ENCODE measurements at regions of chr2 and their contacts with region 1.

Region 1: DNA sequence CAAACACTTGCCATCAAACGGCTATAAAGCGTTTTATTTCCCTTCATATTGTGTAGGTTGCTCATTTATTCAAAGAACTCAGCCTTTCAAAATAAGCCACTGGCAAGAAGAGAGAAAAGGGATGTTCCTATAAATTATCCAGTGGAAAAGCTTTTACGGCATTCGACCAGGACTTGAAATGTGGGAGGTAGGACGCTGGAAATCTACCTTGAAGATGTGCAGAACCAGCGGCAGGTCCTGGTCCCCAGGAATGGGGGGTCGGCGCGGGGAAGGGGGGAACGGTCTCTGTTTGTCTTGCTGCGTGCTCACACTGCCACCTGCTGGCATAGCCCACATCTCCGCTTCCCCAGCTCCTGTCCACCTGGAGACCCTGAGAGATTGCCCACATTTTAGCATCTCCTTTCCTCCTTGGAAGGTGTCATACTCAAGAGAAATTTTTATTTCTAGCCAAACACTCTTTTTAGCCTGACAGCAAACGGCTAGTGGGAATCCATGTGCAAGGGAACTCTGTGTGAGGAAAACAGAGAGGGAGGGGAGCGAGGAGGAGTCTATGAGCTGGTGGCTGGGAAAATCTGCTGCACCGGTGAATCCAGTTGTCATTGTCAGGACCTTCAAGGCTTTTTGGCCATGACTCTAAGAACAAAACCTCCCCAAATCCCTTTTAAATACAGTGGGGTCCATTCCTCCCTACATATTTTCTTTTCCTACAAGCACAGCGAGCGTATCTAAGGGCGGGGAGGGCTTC is 349.0 kb upstream of the PKDCC start:
- DNase-seq: peak; percentile 85
- H3K4me3 ChIP-seq: peak overlapping the region in 1 of 2 experiments; percentile 12; a peak in 1 of 4 replicates
- H3K27ac ChIP-seq: no peak overlapping the region
- H3K4me1 ChIP-seq: peaks cover 0 to 6% of the 10 kb centered on the region in 2 experiments; a peak in 1 of 4 replicates
- H3K27me3 ChIP-seq: no peaks in the 10 kb centered on the region
- CTCF ChIP-seq: peak; percentile 92
- EP300 ChIP-seq: no peak
- RAD21 ChIP-seq: peak; percentile 96

Region 2: DNA sequence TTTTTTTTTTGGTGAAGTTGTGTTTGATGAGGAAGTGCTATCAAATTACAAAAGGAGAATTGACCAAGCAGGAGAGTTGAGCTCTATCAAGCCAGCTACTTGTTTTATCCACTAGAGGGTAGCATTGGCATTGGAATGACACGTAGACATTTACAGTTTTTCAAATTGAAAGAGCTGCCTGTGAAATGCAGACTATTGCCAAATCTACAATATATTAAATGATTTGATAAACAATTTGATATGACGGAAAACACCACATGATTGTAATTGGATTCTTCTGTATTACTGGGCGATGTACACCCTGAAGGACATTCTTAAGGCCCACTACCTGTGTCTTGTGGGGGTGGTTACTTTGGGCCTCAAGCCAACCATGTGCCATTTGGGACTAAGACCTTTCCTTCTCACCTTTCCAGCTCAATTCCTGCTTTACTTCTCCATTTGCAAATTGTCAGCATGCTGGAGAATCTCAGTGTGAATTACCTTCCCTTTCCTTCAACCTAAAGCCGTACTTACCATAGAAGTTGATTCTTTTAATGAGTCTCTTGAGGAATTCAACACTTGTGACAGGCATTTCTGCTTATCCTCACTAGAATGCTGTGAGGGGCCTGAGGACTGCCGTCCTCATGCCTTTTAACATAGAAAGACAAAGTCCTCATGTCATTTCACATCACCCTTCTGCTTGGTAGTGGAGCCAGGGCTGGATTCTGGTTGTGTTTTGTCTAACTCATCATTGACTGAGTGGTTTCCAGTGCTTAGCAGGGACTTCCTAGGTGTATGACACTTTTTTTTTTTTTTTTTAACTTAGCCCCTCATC is 1785.0 kb before region 1 on chr2:
- CTCF ChIA-PET with region 1: interaction called, 82 read pairs
- POLR2A ChIA-PET with region 1: interaction called, 3 read pairs
- DNase-seq: peak; percentile 57
- H3K4me3 ChIP-seq: no peak overlapping the region; a peak in 1 of 4 replicates
- H3K27ac ChIP-seq: no peak overlapping the region
- H3K4me1 ChIP-seq: no peaks in the 10 kb centered on the region; a peak in 2 of 4 replicates
- H3K27me3 ChIP-seq: no peaks in the 10 kb centered on the region
- CTCF ChIP-seq: peak; percentile 98
- EP300 ChIP-seq: peak in 1 of 2 experiments; percentile 38; a peak in 1 of 4 replicates
- RAD21 ChIP-seq: peak; percentile 100

Region 3: DNA sequence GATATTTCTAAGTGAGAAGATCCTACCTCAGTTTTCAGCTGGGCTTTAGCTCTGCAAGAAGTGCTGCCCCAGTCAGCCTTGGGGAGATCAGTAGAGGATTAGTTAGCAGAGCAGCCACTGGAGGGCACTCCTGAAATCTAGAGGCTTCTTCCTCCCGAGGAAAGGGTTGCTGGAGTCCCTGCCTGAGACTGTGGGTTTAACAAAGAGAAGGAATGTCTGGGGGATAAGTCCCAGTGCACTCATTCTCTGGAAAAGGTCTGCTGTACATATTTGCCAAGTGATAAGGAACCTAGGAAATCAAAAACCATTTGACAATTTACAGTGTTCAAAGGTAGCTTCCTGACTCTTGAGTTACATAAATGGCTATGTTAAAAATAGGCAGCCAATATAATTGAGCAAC is 1454.2 kb before region 1 on chr2:
- CTCF ChIA-PET with region 1: interaction called, 10 read pairs
- POLR2A ChIA-PET with region 1: no interaction called
- DNase-seq: peak; percentile 42
- H3K4me3 ChIP-seq: no peak overlapping the region
- H3K27ac ChIP-seq: no peak overlapping the region
- H3K4me1 ChIP-seq: peaks cover 0 to 8% of the 10 kb centered on the region in 2 experiments; a peak in 2 of 4 replicates
- H3K27me3 ChIP-seq: no peaks in the 10 kb centered on the region
- CTCF ChIP-seq: peak; percentile 65
- EP300 ChIP-seq: no peak
- RAD21 ChIP-seq: peak; percentile 74

Region 4: DNA sequence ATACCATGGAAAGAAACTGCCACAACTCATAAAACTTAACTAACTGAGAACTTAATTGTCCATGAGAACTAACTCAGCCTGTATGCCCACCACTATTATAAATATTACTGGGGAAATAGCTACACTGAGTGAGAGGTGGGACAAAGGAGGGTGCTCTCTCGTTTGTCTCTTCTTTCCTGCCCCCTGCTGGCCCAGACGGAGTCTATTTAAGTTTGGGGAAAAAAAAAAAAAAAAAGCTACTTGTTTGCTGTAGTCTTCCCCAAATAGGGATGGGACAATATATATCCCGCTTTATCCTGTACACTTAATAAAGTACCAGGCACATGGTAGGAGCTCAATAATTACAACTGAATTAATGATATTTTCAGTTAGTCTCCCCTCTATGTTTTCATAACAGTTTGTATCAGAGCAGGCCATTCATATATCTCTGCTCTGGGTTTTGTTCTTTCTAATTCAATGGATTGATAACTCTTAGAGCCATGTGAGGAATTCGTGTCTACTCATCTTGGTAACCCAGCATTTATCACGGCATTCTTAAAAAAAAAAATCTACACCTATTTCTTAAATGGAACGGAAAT is 298.7 kb before region 1 on chr2:
- CTCF ChIA-PET with region 1: interaction called, 26 read pairs
- POLR2A ChIA-PET with region 1: no interaction called
- DNase-seq: peak; percentile 36
- H3K4me3 ChIP-seq: no peak overlapping the region
- H3K27ac ChIP-seq: no peak overlapping the region
- H3K4me1 ChIP-seq: no peaks in the 10 kb centered on the region
- H3K27me3 ChIP-seq: no peaks in the 10 kb centered on the region
- CTCF ChIP-seq: peak; percentile 51
- EP300 ChIP-seq: no peak
- RAD21 ChIP-seq: peak; percentile 80

Region 5: DNA sequence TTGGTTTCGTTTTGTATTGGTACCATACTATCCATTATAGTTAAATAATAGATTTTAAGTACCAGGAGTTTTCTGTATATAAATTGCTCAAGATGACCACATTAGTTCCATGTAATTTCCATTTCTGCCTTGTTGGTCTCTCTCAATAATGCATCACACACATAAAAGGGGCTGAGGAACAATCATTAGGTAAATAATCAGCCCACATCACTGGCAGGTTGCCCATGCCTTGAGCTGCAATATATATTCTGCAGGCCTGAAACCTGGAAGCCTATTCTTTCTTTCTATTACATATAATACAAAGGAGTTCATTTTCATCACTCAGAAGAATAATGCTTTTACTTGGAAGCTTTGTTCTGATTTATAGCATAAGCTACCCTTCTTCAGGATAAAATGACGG is 267.1 kb before region 1 on chr2:
- CTCF ChIA-PET with region 1: interaction called, 12 read pairs
- POLR2A ChIA-PET with region 1: no interaction called
- DNase-seq: peak; percentile 4
- H3K4me3 ChIP-seq: no peak overlapping the region
- H3K27ac ChIP-seq: no peak overlapping the region
- H3K4me1 ChIP-seq: no peaks in the 10 kb centered on the region; a peak in 1 of 4 replicates
- H3K27me3 ChIP-seq: no peaks in the 10 kb centered on the region
- CTCF ChIP-seq: no peak
- EP300 ChIP-seq: no peak
- RAD21 ChIP-seq: no peak

Region 6: DNA sequence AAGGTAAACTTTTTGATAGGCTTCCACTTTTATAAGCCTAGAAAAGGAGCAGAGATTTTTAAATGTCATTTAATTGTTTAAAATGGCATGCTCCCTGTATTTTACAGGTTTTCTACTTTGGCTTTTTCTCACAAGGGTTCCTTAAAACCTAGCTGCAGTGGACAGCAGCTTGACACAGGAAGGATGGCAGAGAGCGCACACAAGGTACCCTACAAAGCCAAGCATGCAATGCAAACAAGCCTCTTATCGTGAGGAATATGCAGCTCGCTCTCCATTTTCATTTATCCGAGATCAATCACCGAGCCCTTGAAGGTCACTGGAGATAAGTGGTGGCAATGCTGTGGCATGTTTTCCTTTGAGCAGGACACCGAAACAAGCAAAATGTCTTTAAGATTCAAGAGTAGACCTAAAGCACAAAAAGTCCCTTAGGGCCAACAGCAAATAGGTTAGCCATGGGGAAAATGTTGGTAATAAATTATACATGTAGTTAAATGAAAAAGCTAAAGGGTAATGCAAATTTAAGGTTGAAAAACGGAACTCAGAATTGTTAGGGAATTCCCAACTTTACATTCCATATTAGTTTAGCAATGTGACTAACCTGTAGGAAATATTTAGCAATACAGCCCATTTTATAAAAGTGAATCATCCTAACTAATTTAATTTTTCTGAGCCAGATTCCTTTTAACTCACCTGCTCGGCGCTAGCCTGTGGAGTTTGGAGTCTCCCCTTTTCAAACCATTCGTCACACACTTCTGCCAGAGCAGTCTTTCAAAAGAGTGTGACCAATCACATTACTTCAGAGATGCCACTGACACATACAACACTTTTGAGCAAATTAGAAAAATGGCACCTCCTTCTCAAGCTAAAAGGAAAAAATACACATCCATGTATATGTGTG is 11.1 kb after region 1 on chr2:
- CTCF ChIA-PET with region 1: interaction called, 28 read pairs
- POLR2A ChIA-PET with region 1: no interaction called
- DNase-seq: no peak
- H3K4me3 ChIP-seq: no peak overlapping the region
- H3K27ac ChIP-seq: no peak overlapping the region
- H3K4me1 ChIP-seq: no peaks in the 10 kb centered on the region; a peak in 1 of 4 replicates
- H3K27me3 ChIP-seq: no peaks in the 10 kb centered on the region
- CTCF ChIP-seq: no peak
- EP300 ChIP-seq: no peak
- RAD21 ChIP-seq: no peak

Region 7: DNA sequence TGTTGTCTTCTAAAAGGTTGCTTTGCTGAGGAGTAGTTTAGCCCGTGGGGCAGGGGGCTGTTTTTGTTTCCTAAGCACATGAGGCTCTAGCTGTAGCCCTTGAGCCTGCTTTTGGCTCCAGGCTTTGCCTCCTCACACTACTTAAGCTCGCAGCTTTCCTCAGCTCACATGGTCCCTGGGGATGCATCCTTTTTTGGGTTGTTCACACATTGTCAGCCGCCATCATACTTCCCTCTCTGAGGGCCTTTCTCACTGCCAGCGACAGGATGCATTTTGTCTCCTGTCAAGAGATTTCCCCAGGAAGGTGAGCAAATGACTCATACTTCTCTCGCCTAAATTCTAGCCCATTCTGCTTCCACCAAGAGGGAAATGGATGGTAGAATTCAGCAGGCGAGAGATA is 69.5 kb after region 1 on chr2:
- CTCF ChIA-PET with region 1: interaction called, 10 read pairs
- POLR2A ChIA-PET with region 1: no interaction called
- DNase-seq: no peak
- H3K4me3 ChIP-seq: no peak overlapping the region
- H3K27ac ChIP-seq: no peak overlapping the region
- H3K4me1 ChIP-seq: no peaks in the 10 kb centered on the region
- H3K27me3 ChIP-seq: 0 out of 2 replicates have a peak, but pooled peaks cover 6% of the 10 kb centered on the region
- CTCF ChIP-seq: no peak
- EP300 ChIP-seq: no peak
- RAD21 ChIP-seq: no peak

Region 8: DNA sequence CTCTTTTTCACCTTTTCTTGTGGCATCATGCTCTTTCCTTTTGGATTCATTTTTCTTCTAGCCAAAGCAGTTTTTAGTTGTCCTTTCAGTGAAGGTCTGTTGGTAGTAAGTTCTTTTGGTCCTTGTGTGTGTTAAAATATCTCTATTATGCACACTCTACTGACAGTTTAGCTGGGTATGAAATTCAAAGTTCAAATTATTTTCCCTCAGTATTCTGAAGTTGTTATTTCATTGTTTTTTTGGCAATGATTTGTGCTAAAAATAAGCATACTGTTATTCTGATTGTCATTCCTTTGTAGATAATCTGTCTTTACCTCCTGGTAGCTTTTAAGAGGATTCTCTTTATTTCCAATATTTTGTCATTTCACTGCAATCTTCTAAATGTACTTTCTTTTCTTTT is 715.3 kb after region 1 on chr2:
- CTCF ChIA-PET with region 1: no interaction called
- POLR2A ChIA-PET with region 1: no interaction called
- DNase-seq: no peak
- H3K4me3 ChIP-seq: no peak overlapping the region
- H3K27ac ChIP-seq: no peak overlapping the region
- H3K4me1 ChIP-seq: no peaks in the 10 kb centered on the region
- H3K27me3 ChIP-seq: no peaks in the 10 kb centered on the region
- CTCF ChIP-seq: no peak
- EP300 ChIP-seq: no peak
- RAD21 ChIP-seq: no peak

Measured in SK-N-SH (cell line).